ENCODE measurements at regions of chr2 and their contacts with region 1.

Region 1: DNA sequence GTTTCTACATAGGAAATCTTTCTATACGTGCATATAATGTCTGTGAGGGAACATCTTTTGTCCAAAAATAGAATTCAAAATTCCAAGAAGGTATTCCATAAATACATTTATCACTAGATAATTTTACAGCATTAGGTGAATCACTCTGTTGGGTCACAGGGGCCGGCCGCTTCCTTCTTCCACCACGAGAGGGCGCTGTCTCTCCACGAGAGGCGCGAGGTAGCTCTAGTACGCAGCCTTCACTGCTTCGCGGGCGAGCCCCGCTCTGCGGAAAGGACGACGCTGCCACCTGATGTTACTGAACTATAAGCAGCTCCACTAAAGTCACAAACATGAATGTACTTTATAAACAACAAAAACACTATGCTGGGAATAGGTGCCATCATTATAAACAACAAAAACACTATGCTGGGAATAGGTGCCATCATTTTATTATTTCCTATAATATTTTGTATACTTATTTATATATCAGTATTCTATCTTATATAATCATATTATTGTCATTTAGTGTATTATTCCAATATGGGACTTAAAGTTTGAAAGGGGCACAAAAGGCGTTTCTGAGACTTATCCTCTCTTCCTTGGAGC is 69.4 kb upstream of the REV1 start:
- DNase-seq: peak; percentile 52 to 72
- ATAC-seq: peak; percentile 87 to 91
- H3K4me3 ChIP-seq: no peak overlapping the region
- H3K27ac ChIP-seq: no peak overlapping the region
- H3K4me1 ChIP-seq: no peaks in the 10 kb centered on the region
- H3K27me3 ChIP-seq: no peaks in the 10 kb centered on the region
- CTCF ChIP-seq: peak; percentile 92 to 99 (median 95)
- POLR2A ChIP-seq: no peak

Region 2: DNA sequence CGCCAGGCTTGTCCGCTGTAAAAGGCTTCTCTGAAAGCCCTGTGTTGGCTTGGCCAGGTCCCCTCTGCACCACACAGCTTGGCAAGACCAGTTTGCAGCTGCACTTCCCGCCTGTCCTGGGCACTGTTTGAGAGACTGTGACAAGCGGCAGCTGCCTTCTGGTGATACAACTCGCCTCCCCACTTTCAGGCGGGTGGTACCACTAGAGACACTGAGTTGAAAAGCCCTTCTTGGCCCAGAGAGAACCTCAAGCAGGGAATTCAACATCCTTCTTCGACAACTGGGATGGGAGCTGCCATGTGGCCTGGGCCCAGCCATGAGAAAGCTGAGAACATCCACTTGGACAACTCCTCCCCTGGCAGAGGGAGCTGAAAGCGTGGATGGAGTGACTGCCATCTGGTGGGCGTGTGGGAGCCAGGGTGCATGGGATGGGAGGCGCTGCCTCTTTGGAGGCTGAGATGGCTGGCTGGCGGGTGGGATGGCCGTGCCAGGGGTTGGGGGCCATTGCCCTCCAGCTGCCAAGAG is 56.1 kb after region 1 on chr2:
- in situ Hi-C with region 1: no loop called
- intact Hi-C with region 1: loop called (anchors 2 kb)
- DNase-seq: peak; percentile 19 to 25
- ATAC-seq: peak; percentile 74 to 77
- H3K4me3 ChIP-seq: no peak overlapping the region
- H3K27ac ChIP-seq: no peak overlapping the region
- H3K4me1 ChIP-seq: no peaks in the 10 kb centered on the region
- H3K27me3 ChIP-seq: no peaks in the 10 kb centered on the region
- CTCF ChIP-seq: peak in 3 of 5 experiments; percentile 17 to 44 (median 36)
- POLR2A ChIP-seq: no peak

Region 3: DNA sequence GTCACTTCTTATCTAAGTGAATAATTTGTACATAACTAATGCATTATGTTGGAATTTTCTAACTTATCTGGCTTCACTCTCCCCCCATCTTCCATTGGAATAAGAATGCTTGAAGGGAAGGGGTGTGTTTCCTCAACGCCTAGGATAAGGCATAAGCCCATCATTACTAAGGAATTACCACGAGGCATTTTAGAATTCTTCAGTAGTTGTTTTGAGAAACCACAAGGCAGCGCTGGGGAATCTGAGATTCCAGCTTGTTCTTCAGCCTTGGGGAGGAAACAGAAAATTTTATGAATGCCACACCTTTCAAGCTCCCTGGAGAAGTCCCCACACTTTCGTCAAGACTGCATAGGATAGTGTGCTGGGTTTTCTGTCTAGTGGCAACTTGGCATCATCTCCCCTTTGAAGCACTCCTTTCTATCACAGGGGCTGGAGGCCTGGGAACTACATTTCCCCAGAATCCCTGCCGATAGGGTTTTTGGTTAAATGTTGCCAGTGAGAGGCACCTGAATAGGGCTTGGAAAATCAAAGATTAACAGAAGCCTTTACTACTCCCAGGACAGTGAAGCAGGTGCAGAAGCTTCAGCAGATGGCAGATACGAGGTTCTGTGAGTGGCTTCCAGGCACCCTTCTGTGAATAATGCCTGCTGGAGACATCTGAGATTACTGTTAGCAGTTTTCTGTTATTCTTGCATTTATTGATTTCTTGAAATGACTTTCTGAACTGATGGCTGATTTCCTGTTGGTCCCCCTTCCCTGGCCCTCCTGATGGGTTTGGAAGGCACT is 123.3 kb after region 1 on chr2:
- in situ Hi-C with region 1: no loop called
- intact Hi-C with region 1: no loop called
- DNase-seq: no peak
- ATAC-seq: no peak
- H3K4me3 ChIP-seq: no peak overlapping the region
- H3K27ac ChIP-seq: no peak overlapping the region
- H3K4me1 ChIP-seq: no peaks in the 10 kb centered on the region
- H3K27me3 ChIP-seq: no peaks in the 10 kb centered on the region
- CTCF ChIP-seq: no peak
- POLR2A ChIP-seq: no peak

Region 4: GRCh38 chr2:99818842-99819241 is 259.7 kb after region 1 on chr2:
- in situ Hi-C with region 1: loop called in 2 of 4 experiments (anchors 25 kb)
- intact Hi-C with region 1: no loop called
- DNase-seq: no peak
- ATAC-seq: no peak
- H3K4me3 ChIP-seq: no peak overlapping the region
- H3K27ac ChIP-seq: no peak overlapping the region
- H3K4me1 ChIP-seq: no peaks in the 10 kb centered on the region
- H3K27me3 ChIP-seq: no peaks in the 10 kb centered on the region
- CTCF ChIP-seq: no peak
- POLR2A ChIP-seq: no peak

Region 5: DNA sequence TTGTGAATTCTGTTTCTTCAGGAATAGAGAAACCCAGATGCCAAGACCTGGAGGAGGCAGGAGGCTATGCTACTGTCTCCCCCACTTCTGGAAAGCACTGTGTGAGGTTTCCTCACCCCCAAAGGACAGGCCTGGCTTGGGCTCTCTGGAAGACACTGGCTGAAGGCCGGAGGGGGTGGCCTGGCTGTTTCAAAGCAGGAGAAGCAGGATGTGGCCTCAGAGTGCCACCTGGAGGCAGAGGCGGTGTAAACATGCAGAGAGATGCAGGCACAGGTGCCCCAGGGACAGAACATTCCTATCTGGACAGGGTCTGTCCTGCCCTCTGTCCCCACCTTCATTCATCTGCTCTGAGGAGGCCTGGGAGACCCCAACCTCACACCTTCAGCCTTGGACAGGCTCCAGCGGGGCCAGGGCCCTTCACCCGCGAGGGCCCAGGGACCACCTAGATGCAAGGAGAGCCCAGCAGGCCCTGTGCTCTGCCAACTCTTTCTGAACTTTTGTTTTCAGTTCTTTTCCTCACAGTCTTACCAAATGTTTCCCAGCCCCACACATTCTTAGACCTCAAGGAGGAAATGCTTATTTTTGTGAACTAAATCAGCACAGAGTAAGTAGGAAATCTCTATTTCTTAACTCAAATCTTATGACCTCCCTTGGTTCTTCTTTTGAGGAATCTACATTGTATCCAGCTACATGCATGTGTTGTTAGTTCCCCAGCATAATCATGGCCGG is 683.9 kb after region 1 on chr2:
- in situ Hi-C with region 1: loop called in 3 of 4 experiments (anchors 5 to 10 kb)
- intact Hi-C with region 1: loop called (anchors 1 kb)
- DNase-seq: peak in 1 of 2 donors; percentile 34
- ATAC-seq: peak; percentile 47 to 65
- H3K4me3 ChIP-seq: no peak overlapping the region
- H3K27ac ChIP-seq: no peak overlapping the region
- H3K4me1 ChIP-seq: peaks cover 0 to 3% of the 10 kb centered on the region in 2 donors
- H3K27me3 ChIP-seq: peaks cover 0 to 5% (median 0%) of the 10 kb centered on the region in 3 donors
- CTCF ChIP-seq: peak; percentile 42 to 72 (median 65)
- POLR2A ChIP-seq: no peak

Region 6: DNA sequence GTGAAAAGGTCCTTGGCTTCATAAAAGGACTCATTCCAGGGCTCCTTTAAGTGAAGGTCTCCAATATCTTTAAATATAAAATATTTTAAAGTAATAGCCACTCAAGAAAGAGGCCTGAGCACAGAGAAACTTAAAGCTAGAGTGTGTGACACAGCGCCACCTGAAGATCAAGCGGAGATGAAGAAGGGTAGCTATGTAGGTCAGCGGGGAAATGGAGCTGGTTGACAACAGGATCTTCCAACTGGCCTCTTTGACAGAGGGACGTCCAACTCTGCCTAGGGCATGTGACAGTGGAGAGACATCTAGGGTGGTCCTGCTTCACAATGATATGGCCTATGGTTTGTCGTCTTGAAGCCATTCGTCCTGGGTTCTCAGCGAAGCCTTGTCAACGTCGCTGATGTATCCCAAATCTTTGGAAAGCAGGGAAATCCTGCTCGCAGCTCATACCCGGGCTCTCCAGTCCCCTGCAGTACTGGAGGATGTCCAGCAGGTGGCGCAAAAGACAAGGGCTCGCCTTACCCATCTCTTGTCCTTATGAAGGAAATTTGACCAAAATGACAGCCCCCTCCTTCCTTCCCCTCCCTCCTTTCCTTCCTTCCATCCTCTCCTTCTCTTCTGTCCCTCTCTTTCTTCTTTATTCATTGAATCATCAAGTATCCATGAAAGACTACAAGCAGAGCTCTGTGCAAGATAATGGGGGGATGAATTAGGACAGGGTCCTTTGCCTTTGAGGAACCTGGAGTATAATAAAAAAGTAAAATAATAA is 703.6 kb after region 1 on chr2:
- in situ Hi-C with region 1: loop called in 1 of 4 experiments (anchors 10 kb)
- intact Hi-C with region 1: loop called (anchors 1 kb)
- DNase-seq: peak; percentile 20 to 58
- ATAC-seq: peak; percentile 35 to 83
- H3K4me3 ChIP-seq: no peak overlapping the region
- H3K27ac ChIP-seq: no peak overlapping the region
- H3K4me1 ChIP-seq: no peaks in the 10 kb centered on the region
- H3K27me3 ChIP-seq: no peaks in the 10 kb centered on the region
- CTCF ChIP-seq: peak; percentile 86 to 97 (median 88)
- POLR2A ChIP-seq: no peak